Mammary epithelial cell (primary cell): ENCODE measurements at regions of chr16 and their contacts with region 1.

Region 1: DNA sequence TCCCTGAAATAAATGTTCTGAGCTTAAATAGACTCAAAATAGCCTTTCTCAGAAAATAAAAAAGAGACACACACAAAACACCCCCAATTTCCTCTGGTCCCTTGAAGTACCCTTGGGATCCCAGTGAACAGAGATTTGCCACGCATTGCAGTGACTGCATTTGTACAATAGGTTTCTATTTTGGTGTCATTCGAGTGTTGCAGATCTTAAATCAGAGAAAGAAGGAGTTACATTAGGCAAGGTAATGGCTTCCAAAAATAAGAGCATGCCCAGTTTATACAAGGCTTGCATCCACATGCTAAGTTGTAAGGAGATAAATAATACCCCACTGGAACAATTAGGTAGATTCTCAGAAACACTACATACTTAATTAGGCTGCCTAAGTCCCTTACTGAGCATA is 2.2 kb downstream of the TOX3 start:
- DNase-seq: no peak
- H3K4me3 ChIP-seq: no peak overlapping the region
- H3K27ac ChIP-seq: no peak overlapping the region
- H3K4me1 ChIP-seq: no peaks in the 10 kb centered on the region
- H3K27me3 ChIP-seq: peaks cover 33% of the 10 kb centered on the region
- CTCF ChIP-seq: no peak

Region 2: GRCh38 chr16:52488837-52489289 is 55.8 kb before region 1 on chr16:
- CTCF ChIA-PET with region 1: no interaction called
- dilution Hi-C with region 1: loop called (anchors 5 kb)
- in situ Hi-C with region 1: no loop called
- intact Hi-C with region 1: no loop called
- DNase-seq: no peak
- H3K4me3 ChIP-seq: no peak overlapping the region
- H3K27ac ChIP-seq: no peak overlapping the region
- H3K4me1 ChIP-seq: no peaks in the 10 kb centered on the region
- H3K27me3 ChIP-seq: no peaks in the 10 kb centered on the region
- CTCF ChIP-seq: no peak